Aorta (tissue), 5 donors: ENCODE measurements at regions of chr12 and their contacts with region 1.

Region 1: DNA sequence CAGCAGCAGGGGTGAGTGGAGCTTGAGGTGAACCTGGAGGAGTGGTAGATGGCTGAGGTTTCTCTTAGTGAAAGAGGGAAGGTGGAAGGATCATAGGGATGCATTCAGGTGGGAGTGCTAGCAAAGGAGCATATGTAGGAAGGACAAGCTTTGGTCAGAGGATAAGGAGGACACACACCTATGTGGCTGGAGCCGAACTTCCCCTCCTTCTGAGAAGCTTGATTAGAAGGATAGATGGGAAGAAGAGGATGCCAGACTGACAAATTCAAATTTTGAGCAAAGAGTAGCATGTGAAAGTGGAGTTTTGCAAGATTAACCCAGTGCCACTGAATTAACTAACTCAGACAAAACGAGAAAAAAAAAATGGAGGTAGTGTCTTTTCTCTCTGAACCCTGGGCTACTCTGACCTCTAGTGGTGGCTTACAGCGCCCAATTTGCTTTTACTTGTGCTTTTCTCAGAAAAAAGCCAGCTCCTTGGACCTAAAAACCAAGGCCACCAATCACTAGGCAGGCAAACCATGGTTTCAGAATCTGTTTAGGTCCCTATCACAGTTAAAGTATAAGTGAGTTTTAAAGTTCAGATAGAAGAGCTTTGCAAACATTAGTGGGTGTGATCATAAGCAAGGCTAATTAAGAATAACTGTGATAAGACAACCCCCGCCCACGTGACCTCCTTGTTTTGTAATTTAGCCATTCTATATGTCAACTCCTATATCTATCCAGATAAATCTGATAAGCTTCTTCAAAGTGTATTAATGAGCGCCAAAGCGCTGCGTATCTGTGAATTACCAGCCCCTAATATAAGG is 15.5 kb downstream of the EMP1 start:
- DNase-seq: peak in 1 of 2 donors; percentile 74
- ATAC-seq: peak; percentile 58
- H3K4me3 ChIP-seq: no peak overlapping the region
- H3K27ac ChIP-seq: no peak overlapping the region
- H3K4me1 ChIP-seq: no peaks in the 10 kb centered on the region
- H3K27me3 ChIP-seq: no peaks in the 10 kb centered on the region

Region 2: DNA sequence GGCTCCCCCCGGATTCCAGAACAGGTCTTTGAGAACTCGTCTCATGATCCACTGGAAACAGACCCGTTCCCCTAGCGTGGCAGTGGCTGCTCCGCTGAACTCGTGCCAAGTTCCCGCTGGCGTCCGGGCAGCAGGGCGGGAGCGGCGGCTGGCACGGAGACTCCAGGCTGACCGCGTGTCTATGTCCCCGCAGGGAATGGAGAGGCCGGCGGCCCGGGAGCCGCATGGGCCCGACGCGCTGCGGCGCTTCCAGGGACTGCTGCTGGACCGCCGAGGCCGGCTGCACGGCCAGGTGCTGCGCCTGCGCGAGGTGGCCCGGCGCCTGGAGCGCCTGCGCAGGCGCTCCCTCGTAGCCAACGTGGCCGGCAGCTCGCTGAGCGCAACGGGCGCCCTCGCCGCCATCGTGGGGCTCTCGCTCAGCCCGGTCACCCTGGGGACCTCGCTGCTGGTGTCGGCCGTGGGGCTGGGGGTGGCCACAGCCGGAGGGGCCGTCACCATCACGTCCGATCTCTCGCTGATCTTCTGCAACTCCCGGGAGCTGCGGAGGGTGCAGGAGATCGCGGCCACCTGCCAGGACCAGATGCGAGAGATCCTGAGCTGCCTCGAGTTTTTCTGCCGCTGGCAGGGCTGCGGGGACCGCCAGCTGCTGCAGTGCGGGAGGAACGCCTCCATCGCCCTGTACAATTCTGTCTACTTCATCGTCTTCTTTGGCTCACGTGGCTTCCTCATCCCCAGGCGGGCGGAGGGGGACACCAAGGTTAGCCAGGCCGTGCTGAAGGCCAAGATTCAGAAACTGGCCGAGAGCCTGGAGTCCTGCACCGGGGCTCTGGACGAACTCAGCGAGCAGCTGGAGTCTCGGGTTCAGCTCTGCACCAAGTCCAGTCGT is 425.1 kb before region 1 on chr12:
- intact Hi-C with region 1: loop called in 1 of 2 experiments (anchors 2 kb)
- DNase-seq: peak; percentile 89 to 94
- ATAC-seq: peak; percentile 94
- H3K4me3 ChIP-seq: peak overlapping the region; percentile 42 to 48
- H3K27ac ChIP-seq: peak overlapping the region in 1 of 2 donors; percentile 66
- H3K4me1 ChIP-seq: peaks cover under 1 to 3% of the 10 kb centered on the region in 2 donors
- H3K27me3 ChIP-seq: no peaks in the 10 kb centered on the region

Region 3: GRCh38 chr12:12813120-12814101 is 398.7 kb before region 1 on chr12 and contains the start of gene DDX47:
- intact Hi-C with region 1: loop called in 1 of 2 experiments (anchors 10 kb)
- DNase-seq: peak; percentile 97 to 99
- ATAC-seq: peak; percentile 98
- H3K4me3 ChIP-seq: peak within 1 kb of the TSS; percentile 81 to 91
- H3K27ac ChIP-seq: peak within 1 kb of the TSS in 1 of 2 donors; percentile 11
- H3K4me1 ChIP-seq: peaks cover 0 to 10% of the 10 kb centered on the region in 2 donors
- H3K27me3 ChIP-seq: no peaks in the 10 kb centered on the region
- total RNA-seq, gene DDX47: 42.8 to 46.0 TPM

Region 4: GRCh38 chr12:12916135-12916944 is 295.7 kb before region 1 on chr12:
- intact Hi-C with region 1: loop called (anchors 2 to 5 kb)
- DNase-seq: peak; percentile 89 to 94
- ATAC-seq: peak; percentile 96
- H3K4me3 ChIP-seq: no peak overlapping the region
- H3K27ac ChIP-seq: peak overlapping the region; percentile 10 to 15
- H3K4me1 ChIP-seq: no peaks in the 10 kb centered on the region
- H3K27me3 ChIP-seq: no peaks in the 10 kb centered on the region

Region 5: DNA sequence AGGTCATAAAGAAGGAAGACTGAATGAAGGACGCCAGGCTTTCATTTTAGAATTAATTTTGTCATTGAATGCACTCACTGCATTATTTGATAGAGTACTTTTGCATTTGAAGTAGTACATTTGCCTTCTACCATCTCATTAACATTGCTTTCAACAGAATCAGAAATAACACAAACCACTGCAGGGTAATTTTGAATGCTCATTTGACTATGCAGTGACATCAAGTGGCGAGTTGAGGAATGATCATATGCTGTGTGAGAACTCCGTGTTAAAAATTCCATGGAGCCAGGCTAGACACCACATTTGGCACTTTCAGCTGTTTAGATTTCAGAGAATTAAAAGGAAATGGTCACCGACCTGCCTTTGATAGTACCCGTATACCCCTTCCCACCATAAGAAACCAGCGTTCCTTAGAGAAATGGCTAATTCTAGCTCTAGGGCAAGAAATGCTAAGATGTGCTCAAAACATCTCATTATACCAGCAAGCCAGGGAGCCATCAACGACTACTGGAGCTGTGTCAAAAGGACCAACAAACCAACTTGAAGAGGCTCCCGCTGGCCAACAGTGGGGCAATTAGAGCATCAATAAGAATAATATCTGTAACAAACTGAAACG is 228.5 kb before region 1 on chr12:
- intact Hi-C with region 1: loop called (anchors 5 kb)
- DNase-seq: no peak
- ATAC-seq: peak; percentile 79
- H3K4me3 ChIP-seq: no peak overlapping the region
- H3K27ac ChIP-seq: no peak overlapping the region
- H3K4me1 ChIP-seq: peaks cover 0 to 5% of the 10 kb centered on the region in 2 donors
- H3K27me3 ChIP-seq: no peaks in the 10 kb centered on the region

Region 6: DNA sequence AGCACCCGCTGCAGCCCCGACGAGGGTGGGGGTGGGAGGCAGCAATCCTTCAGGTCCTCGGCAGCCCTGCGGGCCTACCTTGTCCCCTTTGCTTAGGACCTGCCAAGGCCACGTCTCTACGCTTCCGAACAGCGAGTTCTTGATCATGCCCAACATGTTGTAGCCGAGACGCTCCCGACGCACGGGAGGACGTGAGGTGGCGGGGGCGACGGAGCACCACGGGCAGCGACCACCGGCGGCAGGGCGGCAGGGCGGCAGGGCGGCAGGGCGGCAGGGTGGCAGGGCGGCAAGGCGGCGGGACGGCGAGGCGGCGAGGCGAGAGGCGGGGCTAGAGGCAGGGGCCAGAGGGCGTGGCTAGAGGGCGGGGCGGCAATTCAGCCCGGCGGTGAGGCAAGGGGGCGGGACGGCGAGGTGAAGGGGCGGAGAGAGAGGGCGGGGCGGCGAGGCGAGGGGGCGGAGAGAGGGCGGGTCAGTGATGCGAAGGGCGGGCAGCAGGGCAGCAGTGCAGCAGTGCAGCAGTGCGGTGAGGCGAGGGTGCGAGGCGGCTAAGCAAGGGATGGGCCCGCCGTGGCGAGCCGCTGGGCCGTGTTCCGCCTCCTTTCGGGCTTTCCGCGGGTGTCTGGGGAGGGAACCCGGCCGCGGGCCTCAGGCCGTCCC is 212.0 kb before region 1 on chr12 and contains the start of gene HEBP1:
- intact Hi-C with region 1: loop called (anchors 2 to 5 kb)
- DNase-seq: peak; percentile 97 to 99
- ATAC-seq: peak; percentile 98
- H3K4me3 ChIP-seq: peak within 1 kb of the TSS; percentile 84 to 89
- H3K27ac ChIP-seq: peak within 1 kb of the TSS; percentile 83 to 95
- H3K4me1 ChIP-seq: peaks cover 0 to 1% of the 10 kb centered on the region in 2 donors
- H3K27me3 ChIP-seq: no peaks in the 10 kb centered on the region
- total RNA-seq, gene HEBP1: 55.8 to 73.6 TPM

Region 7: DNA sequence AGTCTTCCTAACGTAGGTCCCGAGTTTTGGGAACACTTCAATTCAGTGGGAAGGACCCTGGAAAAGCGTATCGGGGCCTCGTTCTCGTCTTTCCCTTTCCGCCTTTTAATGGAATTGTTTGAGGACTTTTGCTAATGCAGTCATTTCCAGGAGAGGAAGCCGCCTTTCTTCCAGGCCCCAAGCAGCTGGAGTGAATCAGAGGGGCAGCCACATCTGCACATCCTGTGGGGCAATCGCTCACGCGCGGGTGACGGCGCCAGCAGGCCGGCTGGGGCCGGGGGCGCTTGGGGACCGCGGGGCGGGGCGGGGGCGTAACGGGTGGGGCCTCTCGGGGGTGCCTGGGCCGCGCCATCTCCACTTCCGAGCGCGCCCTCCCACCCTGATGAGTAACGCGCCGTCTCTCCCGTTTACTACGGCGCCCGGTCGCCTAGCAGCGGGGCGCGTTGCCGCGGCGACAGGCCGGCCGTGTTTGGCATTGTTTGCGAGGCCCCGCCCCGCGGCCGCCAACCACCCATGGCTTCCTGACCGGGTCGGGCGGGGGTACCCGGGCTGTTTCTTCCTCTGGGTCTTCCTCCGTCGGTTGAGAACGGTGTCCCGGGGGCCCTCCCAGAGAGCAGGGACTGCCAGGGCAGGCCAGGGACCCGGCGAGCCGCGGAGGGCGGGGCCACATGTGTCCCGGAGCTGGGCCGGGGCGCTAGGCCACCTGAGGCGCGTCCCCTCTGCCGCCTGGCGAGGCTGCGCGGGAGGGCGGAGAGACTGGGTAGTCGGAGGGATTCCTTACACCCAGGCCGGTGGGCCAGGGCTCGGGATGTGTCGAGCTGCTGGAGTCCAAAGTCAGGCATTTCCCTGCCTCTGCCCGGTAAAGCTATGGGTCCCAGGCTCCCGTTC is 110.9 kb before region 1 on chr12:
- intact Hi-C with region 1: loop called (anchors 5 kb)
- DNase-seq: peak; percentile 95 to 98
- ATAC-seq: peak; percentile 93
- H3K4me3 ChIP-seq: peak overlapping the region; percentile 16 to 24
- H3K27ac ChIP-seq: peak overlapping the region; percentile 91 to 92
- H3K4me1 ChIP-seq: peaks cover 0 to 2% of the 10 kb centered on the region in 2 donors
- H3K27me3 ChIP-seq: no peaks in the 10 kb centered on the region